ENCODE measurements at regions of chr9 and their contacts with region 1.

Region 1: GRCh38 chr9:77743386-77743785 is 95.3 kb upstream of the GNA14 start:
- DNase-seq: no peak

Region 2: DNA sequence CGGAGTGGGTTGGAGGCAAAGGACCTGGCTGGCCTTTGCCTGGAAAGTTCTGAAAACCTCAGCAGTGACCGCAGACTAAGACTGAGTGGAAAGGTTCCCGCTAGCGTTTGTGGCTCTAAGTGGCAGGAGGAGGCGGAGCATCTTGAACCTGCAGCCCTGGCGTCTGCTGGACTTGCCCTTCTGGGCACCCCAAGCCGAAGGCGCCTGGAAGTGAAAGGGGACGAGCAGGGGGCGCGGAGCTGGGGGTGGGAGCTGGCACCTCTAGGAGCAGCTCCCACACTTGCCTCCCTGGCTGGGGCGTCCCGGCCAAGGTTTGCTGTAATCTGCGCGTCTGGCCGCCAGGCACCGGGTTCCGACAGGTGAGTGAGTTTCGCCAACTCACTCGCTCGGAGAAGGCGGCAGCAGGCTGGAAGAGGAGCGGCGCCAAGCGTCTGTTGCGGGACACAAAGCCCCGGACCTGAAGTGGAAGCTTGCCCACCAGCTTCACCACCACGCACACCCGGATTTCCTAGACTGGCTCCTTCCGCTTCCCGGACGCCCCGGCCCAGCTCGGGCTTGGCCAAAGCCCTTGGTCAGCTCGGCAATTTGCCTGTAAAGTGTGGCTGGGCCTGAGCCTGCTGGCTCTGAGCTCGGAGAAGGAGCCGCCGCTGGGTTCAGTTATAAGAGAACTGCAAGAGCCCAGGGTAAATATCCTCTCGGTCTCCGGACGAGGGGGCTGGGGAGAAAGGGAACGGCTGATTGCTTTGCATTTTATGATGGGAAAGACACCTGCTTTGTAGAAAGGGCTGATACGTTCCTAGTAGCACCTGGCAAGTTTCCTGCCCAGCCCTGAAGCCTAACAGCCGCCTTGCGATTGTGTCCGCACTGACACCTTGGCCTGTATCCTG is 94.9 kb before region 1 on chr9 and contains the start of gene GNA14:
- intact Hi-C with region 1: loop called (anchors 10 kb)
- DNase-seq: peak in 9 of 10 donors; percentile 4 to 91 (median 45)

Region 3: GRCh38 chr9:78248635-78249034 is 505.2 kb after region 1 on chr9:
- intact Hi-C with region 1: no loop called
- DNase-seq: no peak

Measured in posterior cingulate gyrus (tissue), 11 donors.